ENCODE measurements at regions of chr1 and their contacts with region 1.

Region 1: GRCh38 chr1:226736908-226737818 is 1.9 kb downstream of the ITPKB start:
- DNase-seq: peak; percentile 37 to 70
- H3K4me3 ChIP-seq: peak overlapping the region; percentile 73 to 79
- H3K27ac ChIP-seq: peak overlapping the region; percentile 79 to 81
- H3K4me1 ChIP-seq: peaks cover 0 to 50% (median 30%) of the 10 kb centered on the region in 4 donors
- H3K27me3 ChIP-seq: no peaks in the 10 kb centered on the region
- CTCF ChIP-seq: no peak

Region 2: DNA sequence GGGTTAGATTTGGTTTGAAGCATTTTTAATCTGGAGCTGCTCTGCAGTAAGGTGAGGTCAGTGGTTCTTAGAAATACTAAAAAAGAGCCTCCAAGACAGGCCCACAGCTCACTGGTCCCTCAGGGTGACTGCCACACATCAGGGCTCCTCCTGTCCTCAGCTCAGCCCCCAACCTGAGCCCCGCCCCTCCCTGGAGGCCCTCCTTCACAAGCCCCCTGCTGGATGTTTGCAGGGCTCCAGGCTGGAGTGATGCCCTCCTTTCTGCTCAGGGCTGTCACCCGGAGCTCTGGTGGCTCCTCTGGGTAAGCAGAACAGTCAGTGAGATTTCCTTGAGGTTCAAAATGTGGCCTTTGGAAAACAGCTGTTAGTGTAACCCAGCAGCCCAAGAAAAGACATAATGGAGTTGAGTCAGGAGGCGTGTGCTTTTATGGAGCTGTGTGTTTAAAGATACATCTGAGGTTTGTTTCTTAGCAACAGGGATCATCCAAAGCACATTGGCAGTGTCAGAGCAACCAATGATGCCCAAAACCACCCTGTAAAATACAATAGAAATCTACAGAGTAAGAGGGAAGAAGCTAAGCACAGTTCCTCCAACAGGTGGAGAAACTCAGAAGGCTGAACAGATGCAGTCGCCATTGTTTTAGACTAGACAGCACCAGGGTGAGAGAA is 167.2 kb before region 1 on chr1:
- intact Hi-C with region 1: no loop called
- DNase-seq: peak in 1 of 2 donors; percentile 49
- H3K4me3 ChIP-seq: no peak overlapping the region
- H3K27ac ChIP-seq: peak overlapping the region in 1 of 2 donors; percentile 70
- H3K4me1 ChIP-seq: peaks cover 0 to 29% (median 22%) of the 10 kb centered on the region in 4 donors
- H3K27me3 ChIP-seq: no peaks in the 10 kb centered on the region
- CTCF ChIP-seq: no peak

Region 3: DNA sequence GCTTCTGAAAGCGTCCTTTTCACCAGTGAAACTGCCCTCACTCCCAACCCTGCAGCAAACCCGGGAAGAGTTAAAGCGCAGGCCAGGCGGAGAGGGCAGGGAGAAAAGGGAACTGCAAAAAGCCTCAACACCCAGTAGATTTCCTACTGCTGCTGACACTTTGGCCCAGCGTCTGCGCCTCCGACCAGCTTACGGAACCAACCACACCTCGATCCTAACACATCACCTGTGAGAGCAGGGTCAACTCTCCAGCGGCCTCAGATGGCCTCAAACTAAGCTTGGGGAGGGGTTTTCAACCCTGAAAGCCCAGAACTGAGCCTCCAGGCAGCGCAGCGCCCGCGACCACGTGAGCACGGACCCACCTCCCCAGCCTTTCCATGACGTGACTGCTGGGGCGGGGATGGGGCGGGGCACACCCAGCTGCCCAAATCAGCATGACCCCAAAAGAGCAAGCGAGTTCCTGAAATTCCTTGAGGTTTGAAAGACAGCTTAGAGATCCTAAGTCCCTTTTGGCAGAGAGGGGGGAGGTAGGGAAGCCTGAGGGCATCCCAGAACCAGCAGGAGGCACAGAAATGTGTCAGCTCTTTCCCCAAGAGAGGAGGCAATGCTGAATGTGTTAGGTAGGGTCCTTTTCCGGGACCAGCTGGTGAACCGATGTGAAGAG is 57.2 kb before region 1 on chr1:
- intact Hi-C with region 1: loop called (anchors 5 kb)
- DNase-seq: peak; percentile 88 to 94
- H3K4me3 ChIP-seq: peak overlapping the region; percentile 54 to 61
- H3K27ac ChIP-seq: peak overlapping the region; percentile 93 to 96
- H3K4me1 ChIP-seq: peaks cover 4 to 71% (median 40%) of the 10 kb centered on the region in 4 donors
- H3K27me3 ChIP-seq: no peaks in the 10 kb centered on the region
- CTCF ChIP-seq: no peak

Region 4: DNA sequence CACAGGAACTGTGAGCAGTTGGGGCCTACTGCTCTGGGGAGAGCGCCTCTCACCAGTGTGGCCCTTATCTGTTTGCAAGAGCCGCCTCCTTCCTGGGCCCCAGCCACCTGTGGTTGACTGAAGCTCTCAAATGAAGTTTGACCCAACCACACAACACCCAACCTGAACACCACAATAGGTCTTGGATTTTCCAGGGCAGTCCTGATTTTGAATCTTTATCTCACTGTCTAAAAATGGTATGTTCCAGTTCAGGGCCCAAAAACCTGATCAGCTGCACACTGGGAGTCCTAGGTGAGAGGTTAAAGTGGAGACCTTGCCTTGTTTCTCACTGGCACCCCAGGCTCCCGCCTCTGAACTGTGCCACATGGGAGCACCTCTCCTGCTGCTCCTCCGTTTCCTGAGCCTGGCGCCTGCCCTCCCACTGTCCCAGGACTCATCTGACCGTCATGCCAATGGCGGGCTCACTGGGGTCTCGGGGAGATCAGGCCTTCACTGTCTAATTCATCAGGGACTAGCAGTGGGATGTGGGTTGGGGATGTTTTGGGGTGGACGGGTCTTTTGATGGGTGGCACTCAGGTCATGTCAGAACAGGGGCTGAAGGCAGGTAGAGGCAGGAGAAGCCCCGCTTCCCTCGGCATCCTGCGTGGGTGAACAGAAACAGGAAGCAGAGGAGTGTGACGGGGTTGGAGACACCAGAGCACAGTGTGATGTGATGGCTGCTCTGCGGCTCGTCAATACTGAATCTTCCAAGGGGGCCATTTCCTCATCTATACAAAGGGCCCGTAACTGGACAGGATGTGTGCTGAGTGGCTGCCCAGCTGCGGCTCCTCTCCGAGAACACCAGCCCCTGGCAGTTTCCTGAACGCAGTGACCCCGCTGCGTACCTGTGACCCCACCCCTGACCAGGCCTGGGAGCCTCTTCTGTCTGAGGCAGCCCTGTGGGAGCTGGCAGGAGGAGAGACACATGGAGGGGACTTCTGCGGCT is 61.6 kb after region 1 on chr1:
- intact Hi-C with region 1: no loop called
- DNase-seq: no peak
- H3K4me3 ChIP-seq: no peak overlapping the region
- H3K27ac ChIP-seq: no peak overlapping the region
- H3K4me1 ChIP-seq: no peaks in the 10 kb centered on the region
- H3K27me3 ChIP-seq: peaks cover 0 to 6% of the 10 kb centered on the region in 2 donors
- CTCF ChIP-seq: no peak

Measured in tibial artery (tissue), 4 donors.